Naive thymus-derived CD4-positive, alpha-beta T cell (primary cell): ENCODE measurements at regions of chr1 and their contacts with region 1.

Region 1: DNA sequence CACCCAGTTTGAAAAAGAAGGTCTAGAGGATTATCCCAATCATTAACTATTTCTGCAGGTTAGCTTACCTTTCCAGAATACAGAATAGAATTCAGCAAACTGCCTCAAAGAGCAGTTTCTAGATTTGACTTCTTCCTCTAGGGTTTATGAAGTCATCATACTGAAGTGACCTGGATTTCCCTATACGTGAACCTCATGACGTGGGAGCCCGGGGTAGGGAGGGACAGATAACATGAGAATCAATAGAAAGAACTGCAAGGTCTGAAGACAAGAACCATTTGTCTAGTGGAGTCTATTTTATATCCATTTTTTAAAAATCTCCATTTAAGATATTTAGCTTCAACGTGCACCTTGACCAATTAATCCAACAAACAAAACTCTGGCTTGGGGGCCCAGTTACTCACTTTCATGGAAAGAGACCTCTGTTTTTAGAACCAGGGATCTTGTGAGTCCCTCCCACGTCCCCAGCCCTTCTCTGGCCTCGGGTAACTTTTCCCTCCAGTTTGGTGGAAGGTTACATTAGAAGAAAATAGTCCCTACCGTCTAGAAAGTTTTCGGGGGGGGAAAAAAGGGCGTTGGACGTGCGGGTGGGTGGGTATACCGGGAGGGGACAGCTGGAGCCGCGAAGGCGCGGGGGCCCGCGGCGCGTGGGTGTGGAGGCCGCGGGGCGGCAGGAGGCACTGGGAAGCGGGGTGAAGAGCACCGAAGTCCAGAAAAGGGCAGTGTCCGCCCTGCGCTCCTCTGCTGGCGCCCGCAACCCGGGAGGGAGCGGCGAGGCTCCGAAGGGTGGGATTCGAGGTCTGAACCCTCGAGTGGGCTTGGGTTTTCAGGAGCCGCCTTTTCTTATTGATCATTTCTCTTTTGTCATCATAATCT is 13.8 kb upstream of the POGZ start:
- DNase-seq: peak in 8 of 9 donors; percentile 9 to 37 (median 22)
- ATAC-seq: peak; percentile 42
- H3K4me3 ChIP-seq: peak overlapping the region; percentile 58
- H3K4me3 Mint-ChIP-seq: peak overlapping the region; percentile 74 to 89 (median 86)
- H3K27ac ChIP-seq: peak overlapping the region; percentile 58
- H3K27ac Mint-ChIP-seq: peak overlapping the region; percentile 44 to 90 (median 65)
- H3K4me1 ChIP-seq: peaks cover 0 to 4% of the 10 kb centered on the region in 2 donors
- H3K4me1 Mint-ChIP-seq: peaks cover 0 to 21% (median 7%) of the 10 kb centered on the region in 7 donors
- H3K27me3 ChIP-seq: no peaks in the 10 kb centered on the region
- H3K27me3 Mint-ChIP-seq: peaks cover 0 to 12% (median 9%) of the 10 kb centered on the region in 5 donors

Region 2: DNA sequence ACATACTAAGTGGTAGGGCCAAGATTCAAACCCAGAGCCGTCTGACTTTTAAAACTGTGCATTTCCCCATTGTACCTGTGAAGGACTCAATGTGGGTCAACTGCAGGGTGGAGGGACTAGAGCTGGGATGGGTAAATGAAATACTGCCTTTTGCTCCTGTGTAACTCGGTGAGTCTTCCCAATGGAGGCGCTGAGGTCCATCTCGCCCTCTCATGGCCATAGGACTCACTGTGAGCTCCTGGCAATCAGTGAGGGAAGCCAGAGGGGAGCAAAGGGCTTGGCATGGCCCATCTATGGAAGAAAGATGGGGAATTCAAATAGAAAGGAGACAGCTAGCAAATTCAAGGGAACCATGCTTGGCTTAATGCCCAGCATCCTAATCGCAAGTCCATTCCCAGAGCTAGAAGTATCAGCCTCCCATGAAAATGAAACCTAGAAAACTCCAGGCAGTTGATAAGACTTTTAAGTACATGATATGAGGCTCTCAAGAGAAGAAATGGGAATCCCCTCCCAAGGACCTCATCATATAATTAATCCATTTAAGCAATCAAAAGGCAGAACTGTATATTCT is 12.7 kb after region 1 on chr1:
- CTCF ChIA-PET with region 1: no interaction called
- POLR2A ChIA-PET with region 1: interaction called, 3 read pairs
- intact Hi-C with region 1: loop called in 1 of 2 experiments (anchors 1 kb)
- DNase-seq: no peak
- ATAC-seq: no peak
- H3K4me3 ChIP-seq: no peak overlapping the region
- H3K4me3 Mint-ChIP-seq: no peak overlapping the region
- H3K27ac ChIP-seq: no peak overlapping the region
- H3K27ac Mint-ChIP-seq: peak overlapping the region in 2 of 9 donors; percentile 18 to 64
- H3K4me1 ChIP-seq: no peaks in the 10 kb centered on the region
- H3K4me1 Mint-ChIP-seq: no peaks in the 10 kb centered on the region
- H3K27me3 ChIP-seq: no peaks in the 10 kb centered on the region
- H3K27me3 Mint-ChIP-seq: peaks cover 0 to 2% (median 0%) of the 10 kb centered on the region in 5 donors

Region 3: GRCh38 chr1:151547119-151547899 is 74.2 kb after region 1 on chr1:
- CTCF ChIA-PET with region 1: no interaction called
- POLR2A ChIA-PET with region 1: no interaction called
- intact Hi-C with region 1: no loop called
- DNase-seq: no peak
- ATAC-seq: no peak
- H3K4me3 ChIP-seq: no peak overlapping the region
- H3K4me3 Mint-ChIP-seq: peak overlapping the region in 2 of 10 donors; percentile 3 to 64
- H3K27ac ChIP-seq: no peak overlapping the region
- H3K27ac Mint-ChIP-seq: peak overlapping the region in 1 of 9 donors; percentile 8
- H3K4me1 ChIP-seq: no peaks in the 10 kb centered on the region
- H3K4me1 Mint-ChIP-seq: peaks cover 0 to 11% (median 6%) of the 10 kb centered on the region in 7 donors
- H3K27me3 ChIP-seq: no peaks in the 10 kb centered on the region
- H3K27me3 Mint-ChIP-seq: peaks cover 0 to 7% (median 0%) of the 10 kb centered on the region in 5 donors

Region 4: GRCh38 chr1:151565502-151566189 is 92.6 kb after region 1 on chr1:
- CTCF ChIA-PET with region 1: no interaction called
- POLR2A ChIA-PET with region 1: no interaction called
- intact Hi-C with region 1: no loop called
- DNase-seq: no peak
- ATAC-seq: no peak
- H3K4me3 ChIP-seq: no peak overlapping the region
- H3K4me3 Mint-ChIP-seq: no peak overlapping the region
- H3K27ac ChIP-seq: no peak overlapping the region
- H3K27ac Mint-ChIP-seq: no peak overlapping the region
- H3K4me1 ChIP-seq: no peaks in the 10 kb centered on the region
- H3K4me1 Mint-ChIP-seq: peaks cover 0 to 6% (median 0%) of the 10 kb centered on the region in 7 donors
- H3K27me3 ChIP-seq: no peaks in the 10 kb centered on the region
- H3K27me3 Mint-ChIP-seq: no peaks in the 10 kb centered on the region